ENCODE measurements at regions of chr7 and their contacts with region 1.

Region 1: GRCh38 chr7:90749262-90749661 is 153.1 kb downstream of the CDK14 start:
- DNase-seq: no peak
- ATAC-seq: peak; percentile 21
- H3K4me3 Mint-ChIP-seq: no peak overlapping the region
- H3K27ac Mint-ChIP-seq: peak overlapping the region; percentile 35
- H3K4me1 Mint-ChIP-seq: peaks cover 58% of the 10 kb centered on the region
- H3K27me3 Mint-ChIP-seq: no peaks in the 10 kb centered on the region
- CTCF ChIP-seq: no peak

Region 2: DNA sequence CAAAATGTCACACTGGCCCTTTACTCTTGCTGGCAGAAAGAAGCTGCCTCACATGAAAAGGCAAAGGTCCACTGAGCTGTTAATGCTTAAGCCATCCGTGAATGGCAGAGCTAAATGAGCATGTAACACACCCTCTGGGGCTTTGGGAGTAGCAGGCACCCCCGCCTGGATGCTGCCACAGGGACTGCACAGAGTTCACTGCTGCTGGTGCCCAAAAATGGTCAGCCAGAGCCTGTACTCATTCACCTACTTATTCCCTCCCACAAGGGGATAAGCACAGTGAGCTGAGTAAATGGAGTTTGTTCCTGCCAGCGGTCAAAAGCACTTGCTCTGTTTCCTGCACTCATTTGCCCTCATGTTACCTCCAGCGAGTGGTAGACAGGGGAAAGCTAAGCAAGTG is 969.0 kb before region 1 on chr7:
- CTCF ChIA-PET with region 1: no interaction called
- POLR2A ChIA-PET with region 1: no interaction called
- intact Hi-C with region 1: no loop called
- DNase-seq: no peak
- ATAC-seq: no peak
- H3K4me3 Mint-ChIP-seq: no peak overlapping the region
- H3K27ac Mint-ChIP-seq: no peak overlapping the region
- H3K4me1 Mint-ChIP-seq: no peaks in the 10 kb centered on the region
- H3K27me3 Mint-ChIP-seq: no peaks in the 10 kb centered on the region
- CTCF ChIP-seq: no peak

Region 3: DNA sequence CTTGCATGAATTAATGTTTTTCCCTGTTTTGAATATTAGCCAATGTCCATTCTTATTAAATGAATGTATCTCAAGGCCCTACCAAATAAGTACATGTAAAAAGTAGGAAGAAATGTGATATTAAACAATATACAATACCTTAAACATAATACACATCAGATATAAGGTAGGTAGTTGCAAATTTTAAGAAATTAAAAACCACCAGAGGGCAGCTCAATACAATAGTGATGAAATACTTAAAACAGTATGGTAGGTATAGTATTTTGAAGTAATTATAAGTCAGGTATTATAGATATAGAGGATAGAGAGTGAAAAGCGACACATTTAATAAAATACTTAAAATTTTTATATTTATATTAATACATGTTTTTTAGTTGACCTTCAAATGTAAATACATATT is 196.7 kb before region 1 on chr7:
- CTCF ChIA-PET with region 1: interaction called, 3 read pairs
- POLR2A ChIA-PET with region 1: no interaction called
- intact Hi-C with region 1: loop called (anchors 5 kb)
- DNase-seq: no peak
- ATAC-seq: peak; percentile 34
- H3K4me3 Mint-ChIP-seq: no peak overlapping the region
- H3K27ac Mint-ChIP-seq: no peak overlapping the region
- H3K4me1 Mint-ChIP-seq: peaks cover 3% of the 10 kb centered on the region
- H3K27me3 Mint-ChIP-seq: peaks cover 3% of the 10 kb centered on the region
- CTCF ChIP-seq: no peak

Region 4: GRCh38 chr7:90690159-90690858 is 59.0 kb before region 1 on chr7:
- CTCF ChIA-PET with region 1: interaction called, 10 read pairs
- POLR2A ChIA-PET with region 1: no interaction called
- intact Hi-C with region 1: no loop called
- DNase-seq: no peak
- ATAC-seq: peak; percentile 65
- H3K4me3 Mint-ChIP-seq: no peak overlapping the region
- H3K27ac Mint-ChIP-seq: no peak overlapping the region
- H3K4me1 Mint-ChIP-seq: peaks cover 44% of the 10 kb centered on the region
- H3K27me3 Mint-ChIP-seq: no peaks in the 10 kb centered on the region
- CTCF ChIP-seq: no peak

Region 5: GRCh38 chr7:90701021-90701420 is 48.2 kb before region 1 on chr7:
- CTCF ChIA-PET with region 1: interaction called, 13 read pairs
- POLR2A ChIA-PET with region 1: no interaction called
- intact Hi-C with region 1: no loop called
- DNase-seq: no peak
- ATAC-seq: no peak
- H3K4me3 Mint-ChIP-seq: peak overlapping the region; percentile 77
- H3K27ac Mint-ChIP-seq: peak overlapping the region; percentile 83
- H3K4me1 Mint-ChIP-seq: peaks cover 45% of the 10 kb centered on the region
- H3K27me3 Mint-ChIP-seq: no peaks in the 10 kb centered on the region
- CTCF ChIP-seq: no peak

Region 6: GRCh38 chr7:90720984-90721760 is 28.1 kb before region 1 on chr7:
- CTCF ChIA-PET with region 1: interaction called, 21 read pairs
- POLR2A ChIA-PET with region 1: no interaction called
- intact Hi-C with region 1: no loop called
- DNase-seq: no peak
- ATAC-seq: peak; percentile 43
- H3K4me3 Mint-ChIP-seq: no peak overlapping the region
- H3K27ac Mint-ChIP-seq: peak overlapping the region; percentile 70
- H3K4me1 Mint-ChIP-seq: peaks cover 88% of the 10 kb centered on the region
- H3K27me3 Mint-ChIP-seq: no peaks in the 10 kb centered on the region
- CTCF ChIP-seq: no peak

Region 7: DNA sequence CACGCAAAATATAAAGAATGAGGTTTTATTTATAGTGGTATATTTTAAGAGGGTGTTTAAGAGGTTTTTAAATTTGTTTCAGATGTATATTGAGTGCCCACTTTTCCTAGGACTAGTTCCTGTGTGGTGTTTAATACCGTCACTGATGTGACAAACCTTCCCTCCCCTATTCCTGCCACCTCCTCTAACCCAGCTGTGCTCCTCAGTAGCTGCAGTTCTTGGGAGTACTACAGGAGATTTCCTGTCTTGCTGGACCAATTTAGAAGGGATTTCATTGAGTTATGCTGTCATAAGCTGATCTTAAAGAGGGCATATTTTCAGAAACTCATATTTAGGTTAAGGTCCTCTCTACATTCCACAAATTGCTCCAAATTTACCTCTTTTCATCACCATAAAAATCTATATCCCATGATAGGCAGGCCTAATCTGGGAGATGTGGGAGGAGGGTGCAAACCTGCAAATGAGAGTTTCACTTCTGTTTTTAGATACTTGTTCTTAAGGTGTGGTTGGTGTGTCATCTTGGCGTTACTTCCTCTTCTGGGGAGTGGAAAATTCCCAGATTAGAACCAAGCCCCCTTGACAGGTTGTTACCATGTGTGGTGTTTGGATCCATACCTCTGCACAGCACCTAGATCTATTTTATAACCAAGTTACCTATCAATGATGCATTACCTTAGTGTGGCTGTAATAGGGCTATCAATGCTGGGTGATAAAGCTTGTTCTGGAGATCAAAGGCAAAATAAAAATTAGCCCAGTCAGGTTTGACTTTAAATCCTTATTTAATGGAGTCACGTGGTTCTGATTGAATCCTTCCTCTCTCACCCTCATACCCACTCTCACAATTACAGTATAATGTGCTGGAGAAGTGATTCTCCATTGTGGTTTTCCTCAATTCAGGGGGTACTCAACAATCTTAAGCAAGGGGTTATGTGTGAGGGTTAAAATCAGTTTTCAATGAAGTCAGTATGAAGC is 12.0 kb before region 1 on chr7:
- CTCF ChIA-PET with region 1: interaction called, 5 read pairs
- POLR2A ChIA-PET with region 1: no interaction called
- intact Hi-C with region 1: loop called (anchors 1 kb)
- DNase-seq: no peak
- ATAC-seq: peak; percentile 92
- H3K4me3 Mint-ChIP-seq: peak overlapping the region; percentile 59
- H3K27ac Mint-ChIP-seq: peak overlapping the region; percentile 95
- H3K4me1 Mint-ChIP-seq: peaks cover 88% of the 10 kb centered on the region
- H3K27me3 Mint-ChIP-seq: no peaks in the 10 kb centered on the region
- CTCF ChIP-seq: no peak

Region 8: GRCh38 chr7:90759710-90760109 is 10.4 kb after region 1 on chr7:
- CTCF ChIA-PET with region 1: interaction called, 17 read pairs
- POLR2A ChIA-PET with region 1: no interaction called
- intact Hi-C with region 1: loop called (anchors 1 kb)
- DNase-seq: no peak
- ATAC-seq: no peak
- H3K4me3 Mint-ChIP-seq: peak overlapping the region; percentile 24
- H3K27ac Mint-ChIP-seq: peak overlapping the region; percentile 62
- H3K4me1 Mint-ChIP-seq: peaks cover 93% of the 10 kb centered on the region
- H3K27me3 Mint-ChIP-seq: no peaks in the 10 kb centered on the region
- CTCF ChIP-seq: no peak